CD4-positive, alpha-beta T cell (primary cell): ENCODE measurements at regions of chr1 and their contacts with region 1.

Region 1: DNA sequence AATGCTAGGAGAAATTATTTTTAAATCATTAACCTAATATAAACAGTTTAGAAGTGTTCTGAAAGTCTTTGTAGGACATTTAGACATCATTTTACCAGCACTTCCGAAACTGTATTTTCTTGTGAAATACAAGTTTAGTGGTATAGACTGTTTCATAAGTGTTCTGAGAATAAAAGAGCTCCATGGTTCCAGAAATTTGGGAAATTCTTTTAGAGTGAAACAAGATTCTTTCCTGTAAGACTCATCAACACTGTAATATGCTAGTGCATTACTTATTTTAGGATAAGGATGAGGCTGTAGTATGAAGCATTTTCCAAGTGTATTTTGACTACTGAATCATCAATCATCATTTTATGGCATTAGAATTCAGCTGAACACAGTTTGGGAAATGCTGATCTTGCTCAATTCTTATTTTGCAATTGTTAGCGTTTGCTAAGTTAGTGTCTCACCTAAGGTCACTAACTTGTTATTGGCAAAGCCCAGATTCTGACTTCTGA is 73.4 kb downstream of the CEP350 start:
- DNase-seq: no peak
- ATAC-seq: no peak
- H3K4me3 ChIP-seq: no peak overlapping the region
- H3K4me3 Mint-ChIP-seq: no peak overlapping the region
- H3K27ac ChIP-seq: no peak overlapping the region
- H3K27ac Mint-ChIP-seq: no peak overlapping the region
- H3K4me1 ChIP-seq: no peaks in the 10 kb centered on the region
- H3K4me1 Mint-ChIP-seq: peaks cover 4% of the 10 kb centered on the region
- H3K27me3 ChIP-seq: no peaks in the 10 kb centered on the region
- H3K27me3 Mint-ChIP-seq: no peaks in the 10 kb centered on the region
- CTCF ChIP-seq: no peak

Region 2: DNA sequence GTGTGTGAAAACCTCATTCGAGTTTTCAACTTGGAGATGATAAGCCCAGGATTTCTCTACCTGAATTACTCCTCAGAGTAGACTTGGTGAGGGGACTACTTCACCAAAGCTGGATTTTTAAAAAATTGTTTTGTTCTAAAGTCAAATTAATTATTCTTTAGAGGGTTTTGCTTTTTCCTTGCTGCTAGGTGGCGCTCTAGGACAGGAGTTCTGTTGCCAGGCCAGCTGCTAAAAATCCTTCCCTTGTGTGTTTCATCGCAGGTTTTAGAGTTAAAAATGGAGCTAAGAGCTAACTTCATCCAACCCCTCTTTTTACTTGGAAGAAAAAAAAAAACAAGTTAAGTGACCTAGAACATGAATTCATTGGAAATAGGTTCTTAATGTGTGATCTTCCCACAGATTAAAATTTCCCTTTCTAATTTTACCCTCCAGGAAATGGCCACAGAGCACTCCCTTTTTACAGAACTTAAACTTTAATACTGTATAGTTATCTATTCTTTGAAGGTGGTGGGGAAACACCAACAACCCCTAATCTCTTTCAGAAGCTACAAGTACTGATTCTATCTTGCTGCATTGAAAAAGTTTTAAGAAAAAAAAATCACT is 321.6 kb before region 1 on chr1:
- CTCF ChIA-PET with region 1: no interaction called
- POLR2A ChIA-PET with region 1: no interaction called
- intact Hi-C with region 1: loop called in 1 of 2 experiments (anchors 2 kb)
- DNase-seq: peak; percentile 29 to 85 (median 54)
- ATAC-seq: no peak
- H3K4me3 ChIP-seq: no peak overlapping the region
- H3K4me3 Mint-ChIP-seq: no peak overlapping the region
- H3K27ac ChIP-seq: no peak overlapping the region
- H3K27ac Mint-ChIP-seq: peak overlapping the region; percentile 70
- H3K4me1 ChIP-seq: peaks cover 15% of the 10 kb centered on the region
- H3K4me1 Mint-ChIP-seq: peaks cover 25% of the 10 kb centered on the region
- H3K27me3 ChIP-seq: no peaks in the 10 kb centered on the region
- H3K27me3 Mint-ChIP-seq: no peaks in the 10 kb centered on the region
- CTCF ChIP-seq: peak; percentile 80

Region 3: GRCh38 chr1:179867807-179868330 is 160.1 kb before region 1 on chr1:
- CTCF ChIA-PET with region 1: interaction called, 4 read pairs
- POLR2A ChIA-PET with region 1: no interaction called
- intact Hi-C with region 1: loop called in 1 of 2 experiments (anchors 5 kb)
- DNase-seq: peak; percentile 18 to 72 (median 48)
- ATAC-seq: peak; percentile 86
- H3K4me3 ChIP-seq: no peak overlapping the region
- H3K4me3 Mint-ChIP-seq: no peak overlapping the region
- H3K27ac ChIP-seq: no peak overlapping the region
- H3K27ac Mint-ChIP-seq: no peak overlapping the region
- H3K4me1 ChIP-seq: peaks cover 3% of the 10 kb centered on the region
- H3K4me1 Mint-ChIP-seq: peaks cover 37% of the 10 kb centered on the region
- H3K27me3 ChIP-seq: no peaks in the 10 kb centered on the region
- H3K27me3 Mint-ChIP-seq: no peaks in the 10 kb centered on the region
- CTCF ChIP-seq: peak; percentile 74

Region 4: GRCh38 chr1:180241716-180242526 is 213.9 kb after region 1 on chr1:
- CTCF ChIA-PET with region 1: no interaction called
- POLR2A ChIA-PET with region 1: no interaction called
- intact Hi-C with region 1: no loop called
- DNase-seq: no peak
- ATAC-seq: no peak
- H3K4me3 ChIP-seq: no peak overlapping the region
- H3K4me3 Mint-ChIP-seq: no peak overlapping the region
- H3K27ac ChIP-seq: no peak overlapping the region
- H3K27ac Mint-ChIP-seq: no peak overlapping the region
- H3K4me1 ChIP-seq: no peaks in the 10 kb centered on the region
- H3K4me1 Mint-ChIP-seq: peaks cover 3% of the 10 kb centered on the region
- H3K27me3 ChIP-seq: peaks cover 41 to 46% of the 10 kb centered on the region in 2 experiments
- H3K27me3 Mint-ChIP-seq: peaks cover 86% of the 10 kb centered on the region
- CTCF ChIP-seq: no peak